ENCODE measurements at regions of chr13 and their contacts with region 1.

Region 1: GRCh38 chr13:113802145-113802531 is 43.1 kb downstream of the TMEM255B start:
- DNase-seq: peak in 1 of 2 experiments; percentile 81
- H3K4me3 ChIP-seq: peak overlapping the region in 1 of 4 experiments; percentile 30; a peak in 1 of 8 replicates
- H3K27ac ChIP-seq: no peak overlapping the region
- H3K4me1 ChIP-seq: peaks cover 0 to 8% (median 6%) of the 10 kb centered on the region in 4 experiments; a peak in 4 of 7 replicates
- H3K27me3 ChIP-seq: no peaks in the 10 kb centered on the region
- CTCF ChIP-seq: peak in 2 of 3 experiments; percentile 1 to 21; a peak in 2 of 4 replicates
- EP300 ChIP-seq: no peak
- POLR2A ChIP-seq: no peak
- RAD21 ChIP-seq: peak in 1 of 2 experiments; percentile 34; a peak in 2 of 4 replicates

Region 2: DNA sequence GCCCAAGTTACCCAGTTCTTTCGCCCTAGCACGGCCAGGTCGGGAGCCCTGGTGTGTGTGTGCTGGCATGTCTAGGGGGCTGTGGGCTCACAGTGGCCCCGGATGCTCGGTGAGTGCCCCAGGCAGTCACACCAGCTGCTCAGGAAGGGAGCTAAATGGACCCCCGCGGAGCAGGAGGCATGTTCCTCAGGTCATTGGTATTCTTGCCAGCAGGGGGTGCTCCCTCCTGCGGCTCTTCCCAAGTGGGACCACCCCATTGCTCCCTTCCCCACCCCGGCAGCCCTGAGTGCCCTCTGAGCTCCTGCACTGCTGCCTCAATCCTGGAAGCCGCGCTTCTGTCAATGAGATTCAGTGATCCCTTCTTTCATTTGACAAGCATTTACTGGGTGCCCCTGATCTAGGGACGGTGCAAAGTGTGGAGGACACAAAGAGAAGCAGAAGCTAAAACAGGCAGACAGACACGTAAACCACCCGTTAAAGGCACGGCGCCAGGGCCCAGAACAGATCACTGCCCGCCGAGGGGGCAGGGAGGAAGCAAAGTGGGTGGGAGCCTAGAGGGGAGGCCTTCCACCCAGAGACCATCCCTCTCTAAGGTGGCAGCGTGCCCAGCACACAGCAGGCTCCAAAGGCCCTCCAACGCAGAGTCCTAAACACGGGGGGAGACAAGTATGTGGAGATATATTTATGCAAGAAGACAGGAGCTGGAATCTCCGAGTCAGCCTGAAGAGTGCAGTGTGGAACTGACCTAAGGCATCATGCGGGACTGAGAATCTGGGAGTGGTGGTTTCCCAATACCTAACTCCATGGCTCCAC is 343.7 kb before region 1 on chr13:
- CTCF ChIA-PET with region 1: no interaction called
- POLR2A ChIA-PET with region 1: no interaction called
- DNase-seq: no peak
- H3K4me3 ChIP-seq: no peak overlapping the region
- H3K27ac ChIP-seq: no peak overlapping the region
- H3K4me1 ChIP-seq: no peaks in the 10 kb centered on the region; a peak in 1 of 7 replicates
- H3K27me3 ChIP-seq: no peaks in the 10 kb centered on the region
- CTCF ChIP-seq: peak in 1 of 3 experiments; percentile 30; a peak in 1 of 4 replicates
- EP300 ChIP-seq: no peak
- POLR2A ChIP-seq: no peak
- RAD21 ChIP-seq: peak in 1 of 2 experiments; percentile 46; a peak in 3 of 4 replicates

Region 3: DNA sequence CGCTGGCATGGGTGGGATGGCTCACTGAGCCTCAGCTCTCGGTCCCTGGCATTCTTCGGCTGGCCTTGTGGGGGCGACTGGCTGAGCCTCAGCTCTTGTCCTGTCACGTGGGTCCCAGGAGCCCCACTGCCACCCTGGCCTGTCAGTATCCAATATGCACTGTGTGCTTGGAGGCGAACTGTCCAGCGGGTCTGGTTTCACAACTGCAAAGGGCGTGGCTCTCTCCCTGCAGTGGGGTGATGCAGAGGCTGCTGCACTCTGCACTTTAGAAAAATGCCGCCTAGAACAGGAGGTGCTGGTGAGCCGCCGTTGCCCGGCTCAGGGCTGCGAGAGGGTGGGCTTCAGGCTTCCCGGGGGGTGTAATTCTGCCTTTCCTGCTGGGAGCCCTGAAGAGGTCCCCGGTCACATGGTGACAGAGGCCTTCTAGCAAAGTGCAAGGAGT is 60.1 kb before region 1 on chr13:
- CTCF ChIA-PET with region 1: interaction called, 32 read pairs
- POLR2A ChIA-PET with region 1: no interaction called
- DNase-seq: no peak
- H3K4me3 ChIP-seq: no peak overlapping the region
- H3K27ac ChIP-seq: no peak overlapping the region
- H3K4me1 ChIP-seq: peaks cover 0 to 8% (median 3%) of the 10 kb centered on the region in 4 experiments; a peak in 3 of 7 replicates
- H3K27me3 ChIP-seq: no peaks in the 10 kb centered on the region
- CTCF ChIP-seq: peak in 2 of 3 experiments; percentile 48 to 72; a peak in 3 of 4 replicates
- EP300 ChIP-seq: no peak
- POLR2A ChIP-seq: no peak
- RAD21 ChIP-seq: peak; percentile 24 to 42; a peak in 1 of 4 replicates

Region 4: DNA sequence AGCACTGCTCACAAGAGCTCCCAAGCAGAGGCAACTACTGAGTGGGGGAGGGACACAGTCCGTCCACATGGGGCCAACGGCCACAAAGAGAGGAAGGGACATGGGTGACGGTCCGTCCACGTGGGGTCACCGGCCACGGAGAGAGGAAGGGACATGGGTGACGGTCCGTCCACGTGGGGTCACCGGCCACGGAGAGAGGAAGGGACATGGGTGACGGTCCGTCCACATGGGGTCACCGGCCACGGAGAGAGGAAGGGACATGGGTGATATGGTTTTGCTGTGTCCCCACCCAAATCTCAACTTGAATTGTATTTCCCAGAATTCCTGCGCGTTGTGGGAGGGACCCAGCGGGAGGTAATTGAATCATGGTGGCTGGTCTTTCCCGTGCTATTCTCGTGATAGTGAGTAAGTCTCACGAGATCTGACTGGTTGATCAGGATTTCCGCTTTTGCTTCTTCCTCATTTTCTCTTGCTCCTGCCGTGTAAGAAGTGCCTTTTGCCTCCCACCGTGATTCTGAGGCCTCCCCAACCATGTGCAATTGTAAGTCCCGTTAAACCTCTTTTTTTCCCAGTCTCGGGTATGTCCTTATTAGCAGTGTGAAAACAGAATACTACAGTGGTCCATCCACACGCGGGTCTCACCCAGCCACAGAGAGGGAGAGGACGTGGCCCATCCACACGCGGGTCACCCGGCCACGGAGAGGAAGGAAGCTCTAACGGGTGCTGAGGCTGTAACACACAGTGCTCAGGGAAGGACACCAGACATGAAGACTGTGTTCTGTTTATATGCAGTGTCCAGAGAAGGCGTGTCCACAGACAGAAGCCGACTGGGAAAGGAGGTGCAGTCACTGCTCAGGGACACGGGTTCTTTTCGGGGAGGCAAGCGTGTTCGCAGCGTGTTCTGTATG is 13.3 kb after region 1 on chr13:
- CTCF ChIA-PET with region 1: interaction called, 24 read pairs
- POLR2A ChIA-PET with region 1: interaction called, 5 read pairs
- DNase-seq: no peak
- H3K4me3 ChIP-seq: no peak overlapping the region
- H3K27ac ChIP-seq: no peak overlapping the region
- H3K4me1 ChIP-seq: no peaks in the 10 kb centered on the region
- H3K27me3 ChIP-seq: no peaks in the 10 kb centered on the region
- CTCF ChIP-seq: no peak
- EP300 ChIP-seq: no peak
- POLR2A ChIP-seq: no peak
- RAD21 ChIP-seq: no peak

Region 5: GRCh38 chr13:113837554-113838355 is 35.6 kb after region 1 on chr13:
- CTCF ChIA-PET with region 1: no interaction called
- POLR2A ChIA-PET with region 1: no interaction called
- DNase-seq: no peak
- H3K4me3 ChIP-seq: no peak overlapping the region
- H3K27ac ChIP-seq: peak overlapping the region; percentile 70
- H3K4me1 ChIP-seq: peaks cover 0 to 16% (median 7%) of the 10 kb centered on the region in 4 experiments; a peak in 5 of 7 replicates
- H3K27me3 ChIP-seq: no peaks in the 10 kb centered on the region
- CTCF ChIP-seq: no peak
- EP300 ChIP-seq: no peak
- POLR2A ChIP-seq: no peak
- RAD21 ChIP-seq: no peak

Region 6: GRCh38 chr13:113904411-113904810 is 102.3 kb after region 1 on chr13:
- CTCF ChIA-PET with region 1: interaction called, 13 read pairs
- POLR2A ChIA-PET with region 1: no interaction called
- DNase-seq: peak in 1 of 2 experiments; percentile 72
- H3K4me3 ChIP-seq: no peak overlapping the region
- H3K27ac ChIP-seq: no peak overlapping the region
- H3K4me1 ChIP-seq: peaks cover 0 to 2% (median 0%) of the 10 kb centered on the region in 4 experiments; a peak in 1 of 7 replicates
- H3K27me3 ChIP-seq: no peaks in the 10 kb centered on the region; a peak in 1 of 7 replicates
- CTCF ChIP-seq: peak; percentile 88 to 90 (median 89)
- EP300 ChIP-seq: no peak
- POLR2A ChIP-seq: no peak
- RAD21 ChIP-seq: peak; percentile 97 to 98

Measured in H1 (cell line).